Dendritic cell treated with granulocyte-macrophage colony-stimulating factor and Interleukin-4, amounts not matched to agents 40 ng/mL and 50 ng/mL, for 4 days (primary cell): ENCODE measurements at regions of chr9 and their contacts with region 1.

Region 1: DNA sequence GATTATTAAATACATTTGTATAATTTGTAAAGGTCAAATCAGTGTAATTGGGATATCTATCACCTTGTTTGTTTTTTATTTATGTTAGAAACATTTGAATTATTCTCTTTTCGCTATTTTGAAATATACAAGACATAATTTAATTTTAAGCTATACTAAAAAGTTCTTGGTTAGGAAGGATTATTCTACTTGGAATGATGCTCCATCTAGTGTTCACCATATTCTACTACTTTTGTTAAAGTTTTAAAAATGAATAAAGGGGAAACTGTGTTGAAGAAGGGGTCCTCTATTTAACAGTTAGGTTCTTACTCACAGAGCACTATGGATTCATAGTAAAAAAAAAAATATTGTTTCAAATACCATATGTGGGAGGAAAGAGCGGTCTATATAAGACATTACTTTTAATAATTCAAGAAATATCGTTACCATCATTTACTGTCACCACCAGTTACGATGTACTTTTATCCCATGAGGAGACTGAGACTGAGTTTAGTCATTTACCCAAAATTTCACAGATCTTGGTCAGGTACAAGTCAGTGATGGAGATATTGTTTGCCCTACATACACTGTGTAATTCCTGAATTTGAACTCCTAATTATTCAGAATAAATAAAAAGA is 6.3 kb upstream of the STOM start:
- H3K4me3 Mint-ChIP-seq: no peak overlapping the region
- H3K27ac Mint-ChIP-seq: no peak overlapping the region
- H3K4me1 Mint-ChIP-seq: peaks cover 15% of the 10 kb centered on the region
- H3K27me3 Mint-ChIP-seq: no peaks in the 10 kb centered on the region

Region 2: DNA sequence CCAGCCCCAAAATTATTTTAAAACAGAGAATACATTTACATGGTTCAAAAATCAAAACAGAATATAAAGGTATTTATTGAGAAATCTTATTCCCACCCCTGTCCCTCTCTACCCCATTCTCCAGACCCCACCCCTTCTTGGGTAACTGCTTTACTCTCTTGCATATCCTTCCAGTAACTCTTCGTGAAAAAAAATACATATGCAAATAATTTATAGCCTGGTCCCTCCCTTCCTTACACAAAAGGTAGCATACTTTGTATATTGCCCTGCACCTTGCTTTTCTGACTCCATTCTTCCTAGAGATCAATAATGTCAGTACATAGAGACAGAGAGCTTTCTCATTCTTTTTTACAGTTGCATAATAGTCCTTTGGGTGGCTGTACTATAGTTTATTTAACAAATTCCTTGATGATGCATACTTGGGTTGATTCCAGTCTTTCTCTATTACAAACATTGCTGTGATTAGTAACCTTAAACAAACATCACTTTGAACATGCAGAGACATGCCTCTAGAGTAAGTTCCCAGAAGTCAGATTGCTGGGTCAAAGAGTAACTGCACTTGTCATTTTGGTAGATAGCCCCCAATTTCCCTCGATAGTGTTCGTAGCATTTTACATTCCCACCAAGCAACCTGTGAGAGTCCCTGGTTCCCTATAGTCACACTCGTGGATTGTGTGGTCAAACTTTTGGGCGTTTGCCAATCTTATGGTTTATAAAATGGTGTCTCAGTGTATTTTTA is 54.1 kb before region 1 on chr9:
- intact Hi-C with region 1: loop called (anchors 5 kb)
- H3K4me3 Mint-ChIP-seq: no peak overlapping the region
- H3K27ac Mint-ChIP-seq: no peak overlapping the region
- H3K4me1 Mint-ChIP-seq: peaks cover 35% of the 10 kb centered on the region
- H3K27me3 Mint-ChIP-seq: no peaks in the 10 kb centered on the region